Heart right ventricle (tissue), 16 donors: ENCODE measurements at regions of chr14 and their contacts with region 1.

Region 1: DNA sequence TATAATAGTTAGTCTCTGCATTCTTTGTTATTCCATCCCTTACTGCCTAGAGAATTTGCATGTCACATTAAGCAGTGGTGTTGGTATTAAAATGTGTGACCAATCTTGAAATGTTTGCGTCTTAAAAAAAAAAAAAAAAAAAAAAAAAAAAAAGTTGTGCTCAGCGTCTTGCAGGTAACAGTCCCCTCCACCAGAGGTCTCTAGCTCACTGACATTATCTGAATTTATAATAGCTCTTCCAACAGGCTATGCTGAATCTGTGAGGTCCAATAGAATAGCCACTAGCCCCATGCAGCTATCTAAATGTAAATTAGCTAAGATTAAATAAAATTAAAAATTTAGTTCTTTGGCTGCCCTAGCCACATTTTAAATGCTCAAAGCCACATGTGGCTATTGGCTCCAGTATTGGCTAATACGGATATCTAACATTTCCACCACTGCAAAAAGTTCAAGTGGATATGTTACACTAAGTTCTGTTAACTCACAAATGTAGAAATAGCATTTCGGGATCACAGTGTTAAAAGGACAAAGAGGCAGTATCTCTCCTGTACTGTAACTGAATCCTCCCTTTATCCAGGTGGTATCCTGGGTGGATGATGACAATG is 28.7 kb downstream of the NKX2-8 start:
- DNase-seq: no peak
- ATAC-seq: peak in 3 of 8 donors; percentile 55 to 79 (median 58)
- H3K4me3 ChIP-seq: no peak overlapping the region
- H3K27ac ChIP-seq: no peak overlapping the region
- H3K4me1 ChIP-seq: no peaks in the 10 kb centered on the region
- H3K27me3 ChIP-seq: peaks cover 0 to 39% (median 21%) of the 10 kb centered on the region in 7 donors
- CTCF ChIP-seq: peak; percentile 26 to 72 (median 67)

Region 2: DNA sequence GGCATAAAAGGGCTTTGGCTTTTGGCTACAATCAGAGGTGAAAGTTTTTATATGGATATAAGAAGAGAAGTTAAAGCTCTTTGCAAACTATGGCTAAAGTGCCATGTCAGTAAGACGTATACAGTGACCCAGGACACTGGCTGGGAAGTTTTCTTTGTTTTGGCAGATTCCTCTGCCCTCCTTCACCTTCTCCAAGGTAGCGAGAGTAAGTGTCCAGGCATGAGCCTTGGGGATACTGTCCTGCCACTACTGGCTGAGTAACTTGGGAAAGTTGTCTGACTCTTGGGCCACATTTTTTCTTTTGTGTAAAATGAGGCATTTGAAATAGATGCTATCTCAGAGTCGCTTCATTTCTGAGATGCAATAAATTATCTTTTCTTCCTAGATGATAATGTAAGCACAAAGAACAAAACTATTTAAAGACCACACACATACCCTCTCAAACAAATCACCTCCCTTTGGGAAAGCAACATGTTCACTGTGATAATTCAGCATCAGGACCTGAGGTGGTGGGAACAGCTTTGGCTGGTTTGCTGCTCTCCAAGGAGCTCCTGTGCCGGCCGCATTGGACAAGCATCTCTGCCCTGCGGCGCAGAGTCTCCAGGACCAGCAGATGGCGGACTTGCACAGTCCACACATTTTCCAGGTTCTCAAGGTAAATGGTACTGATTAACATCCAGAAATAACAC is 483.6 kb before region 1 on chr14:
- intact Hi-C with region 1: loop called in 1 of 10 experiments (anchors 10 kb)
- DNase-seq: peak in 1 of 2 donors; percentile 26
- ATAC-seq: peak in 4 of 8 donors; percentile 38 to 69 (median 61)
- H3K4me3 ChIP-seq: no peak overlapping the region
- H3K27ac ChIP-seq: no peak overlapping the region
- H3K4me1 ChIP-seq: no peaks in the 10 kb centered on the region
- H3K27me3 ChIP-seq: peaks cover 0 to 45% (median 14%) of the 10 kb centered on the region in 7 donors
- CTCF ChIP-seq: peak; percentile 12 to 69 (median 51)

Region 3: DNA sequence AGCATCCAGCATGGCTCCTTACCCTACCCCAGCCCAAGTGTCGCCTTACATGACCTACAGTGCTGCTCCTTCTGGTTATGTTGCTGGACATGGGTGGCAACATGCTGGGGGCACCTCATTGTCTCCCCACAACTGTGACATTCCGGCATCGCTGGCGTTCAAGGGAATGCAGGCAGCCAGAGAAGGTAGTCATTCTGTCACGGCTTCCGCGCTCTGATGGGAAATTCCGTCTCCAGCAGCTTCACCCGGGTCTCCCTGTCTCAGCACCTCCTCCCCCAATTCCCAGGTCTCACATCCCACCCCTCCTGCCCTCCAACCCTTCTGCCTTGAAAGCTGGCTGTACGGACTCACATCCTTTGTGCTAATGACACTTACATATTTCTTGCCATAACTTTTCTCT is 122.5 kb after region 1 on chr14:
- intact Hi-C with region 1: no loop called
- DNase-seq: no peak
- ATAC-seq: no peak
- H3K4me3 ChIP-seq: no peak overlapping the region
- H3K27ac ChIP-seq: no peak overlapping the region
- H3K4me1 ChIP-seq: no peaks in the 10 kb centered on the region
- H3K27me3 ChIP-seq: peaks cover 0 to 93% (median 68%) of the 10 kb centered on the region in 7 donors
- CTCF ChIP-seq: no peak

Region 4: GRCh38 chr14:36936013-36936678 is 382.4 kb after region 1 on chr14:
- intact Hi-C with region 1: loop called in 5 of 10 experiments (anchors 5 to 10 kb)
- DNase-seq: no peak
- ATAC-seq: no peak
- H3K4me3 ChIP-seq: no peak overlapping the region
- H3K27ac ChIP-seq: no peak overlapping the region
- H3K4me1 ChIP-seq: no peaks in the 10 kb centered on the region
- H3K27me3 ChIP-seq: peaks cover 0 to 24% (median 8%) of the 10 kb centered on the region in 7 donors
- CTCF ChIP-seq: no peak

Region 5: GRCh38 chr14:37142835-37143401 is 589.2 kb after region 1 on chr14:
- intact Hi-C with region 1: loop called in 1 of 10 experiments (anchors 10 kb)
- DNase-seq: no peak
- ATAC-seq: peak in 1 of 8 donors; percentile 28
- H3K4me3 ChIP-seq: no peak overlapping the region
- H3K27ac ChIP-seq: no peak overlapping the region
- H3K4me1 ChIP-seq: no peaks in the 10 kb centered on the region
- H3K27me3 ChIP-seq: no peaks in the 10 kb centered on the region
- CTCF ChIP-seq: no peak